K562 (cell line): ENCODE measurements at regions of chr15 and their contacts with region 1.

Region 1: DNA sequence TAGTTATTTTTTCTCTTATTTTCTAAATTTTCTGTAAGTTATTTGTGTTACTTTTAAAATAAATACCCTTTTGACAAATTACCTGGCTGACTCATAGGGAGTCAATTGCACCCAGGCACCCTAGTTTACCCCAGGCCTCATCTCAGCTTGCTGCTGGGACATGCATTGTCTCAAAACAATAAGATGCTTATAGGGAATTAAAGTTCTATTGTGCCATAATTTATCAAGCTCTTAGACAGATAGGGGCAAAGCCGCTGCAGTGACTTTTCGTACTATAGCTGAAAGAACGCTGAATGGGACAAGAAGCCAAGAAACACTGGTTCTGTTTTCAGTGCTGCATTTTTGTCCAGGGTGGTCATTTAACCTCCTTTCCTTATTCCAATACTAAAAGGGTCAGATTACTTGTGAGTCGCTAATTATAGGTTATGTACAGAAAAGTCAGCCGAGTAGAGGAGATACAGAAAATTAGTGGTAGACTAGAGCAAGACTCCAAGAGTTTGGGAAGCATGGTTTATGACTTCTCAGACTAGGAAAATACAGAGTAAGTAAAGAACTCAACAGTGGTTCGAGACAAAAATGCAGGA is 50.3 kb downstream of the EXD1 start:
- DNase-seq: no peak
- ATAC-seq: no peak
- H3K4me3 ChIP-seq: no peak overlapping the region
- H3K27ac ChIP-seq: no peak overlapping the region
- H3K4me1 ChIP-seq: no peaks in the 10 kb centered on the region
- H3K27me3 ChIP-seq: no peaks in the 10 kb centered on the region
- CTCF ChIP-seq: no peak
- EP300 ChIP-seq: no peak
- POLR2A ChIP-seq: no peak
- RAD21 ChIP-seq: no peak

Region 2: GRCh38 chr15:40906091-40906990 is 274.0 kb before region 1 on chr15:
- CTCF ChIA-PET with region 1: interaction called, 74 read pairs
- POLR2A ChIA-PET with region 1: interaction called, 7 read pairs
- in situ Hi-C with region 1: no loop called
- intact Hi-C with region 1: loop called (anchors 1 kb)
- DNase-seq: peak; percentile 90 to 96 (median 94)
- ATAC-seq: peak; percentile 99
- H3K4me3 ChIP-seq: peak overlapping the region; percentile 34
- H3K27ac ChIP-seq: peak overlapping the region; percentile 52; the same call in 2 of the 3 replicates
- H3K4me1 ChIP-seq: peaks cover 11 to 27% of the 10 kb centered on the region in 2 experiments; a peak in 4 of 5 replicates
- H3K27me3 ChIP-seq: no peaks in the 10 kb centered on the region
- CTCF ChIP-seq: peak; percentile 87 to 96 (median 95)
- EP300 ChIP-seq: no peak
- POLR2A ChIP-seq: 0 out of 2 replicates have a peak, but pooled peaks have one; percentile 32
- RAD21 ChIP-seq: peak; percentile 82 to 87

Region 3: DNA sequence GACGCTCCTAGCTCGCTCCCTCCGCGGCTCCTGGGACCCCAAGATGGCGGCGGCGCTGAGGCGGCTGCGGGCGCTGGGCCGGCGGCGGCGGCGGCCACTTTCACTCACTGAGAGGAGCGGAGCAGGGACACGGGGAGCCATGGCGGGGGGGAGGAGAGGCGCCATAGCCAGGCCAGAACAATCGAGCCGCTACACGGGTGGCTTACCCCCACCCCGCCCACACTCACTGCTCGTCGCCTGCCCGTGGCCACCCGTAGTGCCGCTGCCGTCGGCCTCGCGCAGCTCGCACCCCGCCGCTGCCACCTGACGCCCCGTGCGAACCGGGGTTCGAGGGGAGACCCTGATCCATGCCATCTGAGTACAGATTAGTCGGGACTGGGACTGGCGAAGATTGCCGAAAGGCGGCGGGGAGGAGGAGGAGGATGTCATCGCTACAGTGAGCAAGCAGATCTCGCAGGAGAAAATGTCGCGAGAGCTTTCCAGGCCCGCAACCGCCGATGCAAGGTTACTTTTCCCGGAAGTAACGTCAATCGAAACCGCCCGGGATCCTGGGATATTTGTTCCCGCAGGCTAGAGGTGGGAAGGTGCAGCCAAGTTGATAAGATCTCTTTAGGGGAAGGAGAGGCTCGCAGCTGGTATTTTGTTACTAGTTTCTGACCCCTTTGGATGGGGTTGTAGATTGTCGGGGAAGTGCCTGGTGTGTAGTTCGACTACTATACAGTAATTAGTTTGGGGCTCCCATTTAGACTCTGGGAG is 64.0 kb before region 1 on chr15 and contains the start of gene INO80:
- CTCF ChIA-PET with region 1: no interaction called
- POLR2A ChIA-PET with region 1: no interaction called
- in situ Hi-C with region 1: no loop called
- intact Hi-C with region 1: loop called (anchors 5 kb)
- DNase-seq: peak; percentile 87 to 98 (median 90)
- ATAC-seq: peak; percentile 89
- H3K4me3 ChIP-seq: peak within 1 kb of the TSS; percentile 89
- H3K27ac ChIP-seq: peak within 1 kb of the TSS; percentile 100
- H3K4me1 ChIP-seq: peaks cover 5 to 12% of the 10 kb centered on the region in 2 experiments; a peak in 4 of 5 replicates
- H3K27me3 ChIP-seq: no peaks in the 10 kb centered on the region
- CTCF ChIP-seq: no peak
- EP300 ChIP-seq: peak; percentile 72
- POLR2A ChIP-seq: peak; percentile 88
- RAD21 ChIP-seq: no peak
- polyA plus RNA-seq, gene INO80: 1.1 to 3.9 TPM

Region 4: DNA sequence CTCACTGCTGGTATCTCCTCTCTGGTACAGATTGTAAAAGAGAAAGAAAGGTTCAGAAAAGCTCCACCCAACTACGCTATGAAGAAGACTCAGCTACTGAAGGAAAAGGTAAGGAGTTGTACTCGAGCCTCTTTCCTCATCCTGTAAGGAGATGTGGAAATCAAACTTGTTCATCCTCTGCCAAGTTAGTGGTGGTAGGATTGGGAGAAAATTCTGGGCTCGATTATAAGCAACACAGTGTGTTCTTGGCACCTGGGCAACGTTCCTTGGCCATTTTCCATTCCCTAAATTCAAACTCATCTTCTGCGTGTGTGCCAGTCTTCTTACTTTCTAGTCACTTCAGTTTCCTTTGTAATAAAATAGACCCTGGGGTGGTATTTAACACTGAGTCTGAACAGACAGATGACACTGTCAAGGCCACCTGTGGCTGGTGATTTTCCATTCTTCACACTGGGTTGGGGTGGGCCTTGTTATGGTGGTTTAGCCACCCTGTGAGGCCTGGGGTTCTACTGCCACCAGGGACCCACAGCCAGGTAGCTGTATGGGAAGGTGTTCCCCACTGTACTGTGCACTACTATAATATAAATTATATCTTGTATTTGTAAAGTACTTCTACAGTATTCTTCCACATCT is 296.2 kb after region 1 on chr15:
- CTCF ChIA-PET with region 1: no interaction called
- POLR2A ChIA-PET with region 1: no interaction called
- in situ Hi-C with region 1: no loop called
- intact Hi-C with region 1: no loop called
- DNase-seq: no peak
- ATAC-seq: peak; percentile 7; the same call in 1 of the 3 replicates
- H3K4me3 ChIP-seq: no peak overlapping the region
- H3K27ac ChIP-seq: peak overlapping the region; percentile 82
- H3K4me1 ChIP-seq: peaks cover 0 to 10% of the 10 kb centered on the region in 2 experiments; a peak in 2 of 5 replicates
- H3K27me3 ChIP-seq: no peaks in the 10 kb centered on the region
- CTCF ChIP-seq: no peak
- EP300 ChIP-seq: no peak
- POLR2A ChIP-seq: no peak
- RAD21 ChIP-seq: no peak